Activated CD4-positive, alpha-beta T cell treated with anti-CD3 and anti-CD28 coated beads, Interleukin-2, amount 10 ng/mL, durations not matched to agents 24 days and 14 days (primary cell): ENCODE measurements at regions of chr4 and their contacts with region 1.

Region 1: GRCh38 chr4:88284439-88285234 is at the start of gene PPM1K:
- DNase-seq: peak; percentile 100
- H3K4me3 Mint-ChIP-seq: peak within 1 kb of the TSS; percentile 95
- H3K27ac Mint-ChIP-seq: peak within 1 kb of the TSS; percentile 99
- H3K4me1 Mint-ChIP-seq: peaks cover 37% of the 10 kb centered on the region
- H3K27me3 Mint-ChIP-seq: no peaks in the 10 kb centered on the region
- total RNA-seq, gene PPM1K: 38.8 and 43.8 TPM in 2 replicates

Region 2: GRCh38 chr4:87006676-87007527 is 1277.7 kb before region 1 on chr4:
- intact Hi-C with region 1: loop called (anchors 10 kb)
- DNase-seq: peak; percentile 97
- H3K4me3 Mint-ChIP-seq: peak overlapping the region; percentile 95
- H3K27ac Mint-ChIP-seq: peak overlapping the region; percentile 99
- H3K4me1 Mint-ChIP-seq: peaks cover 50% of the 10 kb centered on the region
- H3K27me3 Mint-ChIP-seq: no peaks in the 10 kb centered on the region

Region 3: GRCh38 chr4:88158489-88159243 is 126.0 kb before region 1 on chr4 and contains the start of gene ABCG2:
- intact Hi-C with region 1: loop called (anchors 5 kb)
- DNase-seq: peak; percentile 86
- H3K4me3 Mint-ChIP-seq: peak within 1 kb of the TSS; percentile 85
- H3K27ac Mint-ChIP-seq: peak within 1 kb of the TSS; percentile 75
- H3K4me1 Mint-ChIP-seq: peaks cover 14% of the 10 kb centered on the region
- H3K27me3 Mint-ChIP-seq: peaks cover 23% of the 10 kb centered on the region
- total RNA-seq, gene ABCG2: 0.56 and 0.76 TPM in 2 replicates

Region 4: GRCh38 chr4:88333741-88334405 is 49.2 kb after region 1 on chr4:
- intact Hi-C with region 1: no loop called
- DNase-seq: no peak
- H3K4me3 Mint-ChIP-seq: no peak overlapping the region
- H3K27ac Mint-ChIP-seq: no peak overlapping the region
- H3K4me1 Mint-ChIP-seq: peaks cover 15% of the 10 kb centered on the region
- H3K27me3 Mint-ChIP-seq: peaks cover 7% of the 10 kb centered on the region

Region 5: GRCh38 chr4:88378691-88379559 is 94.3 kb after region 1 on chr4 and contains the start of gene HERC6:
- intact Hi-C with region 1: loop called (anchors 1 kb)
- DNase-seq: peak; percentile 95
- H3K4me3 Mint-ChIP-seq: peak within 1 kb of the TSS; percentile 86
- H3K27ac Mint-ChIP-seq: peak within 1 kb of the TSS; percentile 83
- H3K4me1 Mint-ChIP-seq: peaks cover 43% of the 10 kb centered on the region
- H3K27me3 Mint-ChIP-seq: no peaks in the 10 kb centered on the region
- total RNA-seq, gene HERC6: 5.3 and 6.4 TPM in 2 replicates

Region 6: GRCh38 chr4:88481537-88481936 is 196.9 kb after region 1 on chr4:
- intact Hi-C with region 1: no loop called
- DNase-seq: no peak
- H3K4me3 Mint-ChIP-seq: no peak overlapping the region
- H3K27ac Mint-ChIP-seq: no peak overlapping the region
- H3K4me1 Mint-ChIP-seq: no peaks in the 10 kb centered on the region
- H3K27me3 Mint-ChIP-seq: no peaks in the 10 kb centered on the region

Region 7: GRCh38 chr4:88591787-88592599 is 307.4 kb after region 1 on chr4 and contains the start of gene HERC3:
- intact Hi-C with region 1: loop called (anchors 2 kb)
- DNase-seq: peak; percentile 98
- H3K4me3 Mint-ChIP-seq: peak within 1 kb of the TSS; percentile 90
- H3K27ac Mint-ChIP-seq: peak within 1 kb of the TSS; percentile 85
- H3K4me1 Mint-ChIP-seq: peaks cover 31% of the 10 kb centered on the region
- H3K27me3 Mint-ChIP-seq: peaks cover 17% of the 10 kb centered on the region
- total RNA-seq, gene HERC3: 18.8 and 18.9 TPM in 2 replicates

Region 8: GRCh38 chr4:89294573-89295269 is 1010.1 kb after region 1 on chr4:
- intact Hi-C with region 1: loop called (anchors 5 kb)
- DNase-seq: peak; percentile 81
- H3K4me3 Mint-ChIP-seq: peak overlapping the region; percentile 68
- H3K27ac Mint-ChIP-seq: peak overlapping the region; percentile 98
- H3K4me1 Mint-ChIP-seq: peaks cover 76% of the 10 kb centered on the region
- H3K27me3 Mint-ChIP-seq: no peaks in the 10 kb centered on the region